ENCODE measurements at regions of chr11 and their contacts with region 1.

Region 1: DNA sequence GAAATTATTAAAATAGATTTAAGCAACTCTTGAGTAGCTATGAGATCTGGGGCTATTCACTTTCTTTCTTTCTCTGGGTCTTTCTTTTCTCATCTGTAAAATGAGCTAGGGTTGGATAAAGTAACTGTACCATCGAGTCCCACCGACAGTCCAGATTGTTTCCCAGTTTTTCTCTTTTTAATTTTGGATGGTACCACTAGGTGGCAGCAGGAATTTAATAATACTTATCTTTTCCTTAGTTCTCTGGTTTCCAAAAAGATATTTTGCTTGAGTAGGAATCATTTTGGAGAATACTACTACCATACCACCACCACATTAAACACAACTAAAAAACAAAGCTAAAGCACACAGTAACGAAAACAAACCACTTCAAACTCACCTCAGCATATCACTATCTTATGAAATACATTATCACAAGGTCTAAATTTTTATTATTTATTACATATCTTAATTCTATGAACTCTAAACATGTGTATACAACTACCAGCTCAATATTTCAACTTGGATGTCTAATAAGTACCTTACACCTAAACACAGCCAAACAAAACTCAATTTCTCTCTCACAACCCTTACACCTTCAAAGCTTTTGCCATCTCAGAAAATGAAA is 584.0 kb downstream of the KCNA4 start:
- H3K4me3 Mint-ChIP-seq: no peak overlapping the region
- H3K27ac Mint-ChIP-seq: no peak overlapping the region
- H3K4me1 Mint-ChIP-seq: no peaks in the 10 kb centered on the region
- H3K27me3 Mint-ChIP-seq: no peaks in the 10 kb centered on the region

Region 2: DNA sequence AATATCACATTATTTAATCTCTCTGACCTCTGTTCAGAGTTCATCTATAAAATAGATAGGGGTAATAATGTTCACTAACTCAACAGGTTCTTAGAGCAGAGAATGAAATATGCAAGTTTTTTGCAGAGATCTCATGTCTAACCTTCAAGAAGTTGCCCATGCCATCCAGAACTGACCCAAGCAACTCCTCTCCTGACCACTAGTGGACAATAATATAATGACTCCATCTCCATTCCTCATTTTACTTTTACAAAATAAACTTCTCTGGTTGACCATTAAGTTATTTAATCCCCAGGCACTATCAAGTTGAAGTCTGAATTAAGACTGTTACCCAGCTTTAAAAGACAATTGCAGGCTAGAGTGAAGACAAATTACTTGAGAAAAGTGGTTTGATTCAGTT is 201.4 kb after region 1 on chr11:
- intact Hi-C with region 1: loop called (anchors 5 kb)
- H3K4me3 Mint-ChIP-seq: no peak overlapping the region
- H3K27ac Mint-ChIP-seq: no peak overlapping the region
- H3K4me1 Mint-ChIP-seq: no peaks in the 10 kb centered on the region
- H3K27me3 Mint-ChIP-seq: no peaks in the 10 kb centered on the region

Measured in dendritic cell treated with granulocyte-macrophage colony-stimulating factor and Interleukin-4, amounts not matched to agents 40 ng/mL and 50 ng/mL, for 4 days (primary cell).